ENCODE measurements at regions of chrX and their contacts with region 1.

Region 1: DNA sequence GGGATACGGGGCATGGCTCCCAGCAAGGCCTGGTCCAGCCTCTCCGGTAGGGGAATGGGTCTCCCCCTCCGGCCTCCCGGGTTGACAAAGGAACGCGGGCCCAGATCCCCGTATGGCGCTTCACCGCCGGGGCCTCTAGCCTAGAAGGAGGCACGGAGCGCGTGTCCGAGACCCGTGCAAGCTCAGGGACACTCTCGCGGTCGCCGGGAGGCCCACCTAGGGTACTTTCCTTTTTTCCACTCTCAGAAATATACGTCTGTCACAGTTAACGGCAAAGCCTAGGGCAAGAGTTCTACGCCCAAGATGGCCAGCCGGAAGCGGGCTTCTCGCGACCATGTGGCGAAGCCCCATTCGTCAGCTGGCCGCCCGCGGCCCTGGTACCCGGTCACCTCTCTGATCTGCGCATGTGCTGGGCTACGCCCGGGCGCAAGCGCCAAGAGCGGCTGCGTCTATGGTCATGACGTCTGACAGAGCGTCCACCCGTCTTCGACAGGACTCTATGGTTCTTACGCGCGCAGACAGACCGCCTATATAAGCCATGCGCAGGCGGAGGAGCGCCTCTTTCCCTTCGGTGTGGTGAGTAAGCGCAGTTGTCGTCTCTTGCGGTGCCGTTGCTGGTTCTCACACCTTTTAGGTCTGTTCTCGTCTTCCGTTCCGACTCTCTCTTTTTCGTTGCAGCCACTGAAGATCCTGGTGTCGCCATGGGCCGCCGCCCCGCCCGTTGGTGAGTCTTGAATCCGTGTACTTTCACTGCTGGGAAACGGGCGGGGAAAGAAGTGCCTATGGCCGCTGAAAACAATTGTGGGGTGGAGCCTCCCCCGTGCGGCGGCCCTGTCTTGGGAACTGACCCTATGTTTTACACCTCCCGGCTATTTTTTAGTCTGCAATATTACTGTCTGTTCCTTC is at the start of gene RPL10:
- DNase-seq: peak; percentile 92
- ATAC-seq: peak; percentile 49
- H3K4me3 ChIP-seq: peak within 1 kb of the TSS; percentile 73 to 85 (median 85)
- H3K27ac ChIP-seq: peak within 1 kb of the TSS; percentile 98
- H3K4me1 ChIP-seq: peaks cover 32% of the 10 kb centered on the region
- H3K27me3 ChIP-seq: no peaks in the 10 kb centered on the region; a peak in 1 of 5 replicates
- CTCF ChIP-seq: no peak
- EP300 ChIP-seq: no peak
- POLR2A ChIP-seq: peak in 1 of 2 experiments; percentile 100; a peak in 2 of 4 replicates
- RAD21 ChIP-seq: no peak
- total RNA-seq, gene RPL10: 2,381 and 2,883 TPM in 2 replicates

Region 2: GRCh38 chrX:154357197-154357596 is 40.9 kb before region 1 on chrX:
- CTCF ChIA-PET with region 1: no interaction called
- POLR2A ChIA-PET with region 1: no interaction called
- in situ Hi-C with region 1: no loop called
- intact Hi-C with region 1: no loop called
- DNase-seq: no peak
- ATAC-seq: no peak
- H3K4me3 ChIP-seq: no peak overlapping the region
- H3K27ac ChIP-seq: no peak overlapping the region
- H3K4me1 ChIP-seq: peaks cover 18% of the 10 kb centered on the region
- H3K27me3 ChIP-seq: no peaks in the 10 kb centered on the region
- CTCF ChIP-seq: no peak
- EP300 ChIP-seq: no peak
- POLR2A ChIP-seq: no peak
- RAD21 ChIP-seq: no peak

Region 3: DNA sequence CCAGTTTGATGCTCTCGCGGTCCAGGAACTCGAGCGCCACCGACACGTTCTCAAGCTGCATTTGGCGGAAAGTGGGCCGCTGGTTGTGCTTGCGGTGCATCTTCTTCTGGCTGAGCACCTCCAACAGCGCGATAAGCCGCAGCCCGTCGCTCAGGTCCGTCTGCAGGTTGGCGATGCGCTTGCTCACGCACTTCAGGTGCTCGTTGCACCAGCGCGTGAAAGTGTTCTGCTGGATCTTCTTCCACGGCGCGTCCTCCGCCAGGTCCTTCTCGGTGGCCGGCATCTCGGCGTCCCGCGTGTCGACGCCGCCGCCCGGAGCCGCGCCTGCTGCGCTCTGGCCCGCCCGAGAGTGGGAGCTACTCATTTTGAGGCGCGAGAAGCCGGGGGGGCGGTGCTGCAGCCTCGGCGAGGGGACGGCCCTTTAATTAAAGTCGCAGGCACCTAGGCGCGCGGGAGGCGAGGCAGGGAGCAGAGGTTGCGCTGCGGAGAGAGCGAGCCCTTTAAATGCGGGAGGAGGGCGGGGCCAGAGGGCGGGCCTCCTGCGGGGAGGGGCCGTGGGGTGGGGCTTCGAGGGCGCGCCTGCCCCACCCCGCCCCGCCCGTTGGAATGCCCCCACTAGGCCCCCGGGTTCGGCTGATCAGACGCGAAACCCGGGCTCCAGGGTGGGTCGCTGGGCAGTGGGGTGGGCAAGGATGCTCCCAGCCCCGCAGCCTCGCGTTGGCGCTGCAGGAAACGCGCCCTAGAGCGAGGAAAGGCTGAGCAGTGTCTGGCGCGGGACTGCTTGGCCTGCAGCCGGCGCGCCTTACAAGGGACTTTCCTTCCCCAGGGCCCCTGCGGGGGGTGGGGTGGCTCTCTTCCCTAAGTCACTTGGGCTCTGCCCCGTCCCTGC is 26.9 kb before region 1 on chrX:
- CTCF ChIA-PET with region 1: no interaction called
- POLR2A ChIA-PET with region 1: interaction called, 15 read pairs
- in situ Hi-C with region 1: no loop called
- intact Hi-C with region 1: no loop called
- DNase-seq: peak; percentile 85
- ATAC-seq: peak; percentile 57
- H3K4me3 ChIP-seq: peak overlapping the region; percentile 65 to 92 (median 80)
- H3K27ac ChIP-seq: peak overlapping the region; percentile 58
- H3K4me1 ChIP-seq: peaks cover 37% of the 10 kb centered on the region
- H3K27me3 ChIP-seq: no peaks in the 10 kb centered on the region
- CTCF ChIP-seq: peak; percentile 25; the same call in 1 of the 2 replicates
- EP300 ChIP-seq: no peak
- POLR2A ChIP-seq: peak in 1 of 2 experiments; percentile 89; a peak in 2 of 4 replicates
- RAD21 ChIP-seq: no peak

Region 4: GRCh38 chrX:154378782-154379591 is 19.1 kb before region 1 on chrX and contains the start of gene EMD:
- CTCF ChIA-PET with region 1: no interaction called
- POLR2A ChIA-PET with region 1: interaction called, 15 read pairs
- in situ Hi-C with region 1: no loop called
- intact Hi-C with region 1: no loop called
- DNase-seq: peak; percentile 93
- ATAC-seq: peak; percentile 88
- H3K4me3 ChIP-seq: peak within 1 kb of the TSS; percentile 72 to 86 (median 76)
- H3K27ac ChIP-seq: peak within 1 kb of the TSS; percentile 77
- H3K4me1 ChIP-seq: peaks cover 33% of the 10 kb centered on the region
- H3K27me3 ChIP-seq: no peaks in the 10 kb centered on the region
- CTCF ChIP-seq: no peak
- EP300 ChIP-seq: no peak
- POLR2A ChIP-seq: no peak
- RAD21 ChIP-seq: no peak
- total RNA-seq, gene EMD: 10.4 and 14.5 TPM in 2 replicates

Region 5: DNA sequence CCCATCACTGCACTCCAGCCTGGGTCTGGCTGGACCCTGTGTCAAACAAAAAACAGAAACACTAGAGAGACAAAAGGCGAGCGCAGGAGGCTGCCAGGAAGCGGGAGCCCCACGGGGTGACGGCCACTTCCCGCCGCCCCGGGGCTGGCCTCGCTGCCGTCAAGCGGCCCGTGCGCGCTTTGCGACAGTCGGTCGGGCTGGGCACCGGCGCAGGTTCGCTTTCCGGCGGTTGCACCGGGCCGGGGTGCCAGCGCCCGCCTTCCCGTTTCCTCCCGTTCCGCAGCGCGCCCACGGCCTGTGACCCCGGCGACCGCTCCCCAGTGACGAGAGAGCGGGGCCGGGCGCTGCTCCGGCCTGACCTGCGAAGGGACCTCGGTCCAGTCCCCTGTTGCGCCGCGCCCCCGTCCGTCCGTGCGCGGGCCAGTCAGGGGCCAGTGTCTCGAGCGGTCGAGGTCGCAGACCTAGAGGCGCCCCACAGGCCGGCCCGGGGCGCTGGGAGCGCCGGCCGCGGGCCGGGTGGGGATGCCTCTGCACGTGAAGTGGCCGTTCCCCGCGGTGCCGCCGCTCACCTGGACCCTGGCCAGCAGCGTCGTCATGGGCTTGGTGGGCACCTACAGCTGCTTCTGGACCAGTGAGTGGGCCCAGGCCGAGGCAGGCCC is 13.4 kb after region 1 on chrX and contains the start of gene TAFAZZIN:
- CTCF ChIA-PET with region 1: no interaction called
- POLR2A ChIA-PET with region 1: interaction called, 75 read pairs
- in situ Hi-C with region 1: no loop called
- intact Hi-C with region 1: no loop called
- DNase-seq: peak; percentile 21
- ATAC-seq: peak; percentile 58
- H3K4me3 ChIP-seq: peak within 1 kb of the TSS; percentile 57 to 73 (median 72)
- H3K27ac ChIP-seq: peak within 1 kb of the TSS; percentile 67
- H3K4me1 ChIP-seq: peaks cover 25% of the 10 kb centered on the region
- H3K27me3 ChIP-seq: no peaks in the 10 kb centered on the region
- CTCF ChIP-seq: no peak
- EP300 ChIP-seq: no peak
- POLR2A ChIP-seq: peak; percentile 33 to 78; a peak in 3 of 4 replicates
- RAD21 ChIP-seq: no peak
- total RNA-seq, gene TAFAZZIN: 6.3 and 16.8 TPM in 2 replicates

Region 6: DNA sequence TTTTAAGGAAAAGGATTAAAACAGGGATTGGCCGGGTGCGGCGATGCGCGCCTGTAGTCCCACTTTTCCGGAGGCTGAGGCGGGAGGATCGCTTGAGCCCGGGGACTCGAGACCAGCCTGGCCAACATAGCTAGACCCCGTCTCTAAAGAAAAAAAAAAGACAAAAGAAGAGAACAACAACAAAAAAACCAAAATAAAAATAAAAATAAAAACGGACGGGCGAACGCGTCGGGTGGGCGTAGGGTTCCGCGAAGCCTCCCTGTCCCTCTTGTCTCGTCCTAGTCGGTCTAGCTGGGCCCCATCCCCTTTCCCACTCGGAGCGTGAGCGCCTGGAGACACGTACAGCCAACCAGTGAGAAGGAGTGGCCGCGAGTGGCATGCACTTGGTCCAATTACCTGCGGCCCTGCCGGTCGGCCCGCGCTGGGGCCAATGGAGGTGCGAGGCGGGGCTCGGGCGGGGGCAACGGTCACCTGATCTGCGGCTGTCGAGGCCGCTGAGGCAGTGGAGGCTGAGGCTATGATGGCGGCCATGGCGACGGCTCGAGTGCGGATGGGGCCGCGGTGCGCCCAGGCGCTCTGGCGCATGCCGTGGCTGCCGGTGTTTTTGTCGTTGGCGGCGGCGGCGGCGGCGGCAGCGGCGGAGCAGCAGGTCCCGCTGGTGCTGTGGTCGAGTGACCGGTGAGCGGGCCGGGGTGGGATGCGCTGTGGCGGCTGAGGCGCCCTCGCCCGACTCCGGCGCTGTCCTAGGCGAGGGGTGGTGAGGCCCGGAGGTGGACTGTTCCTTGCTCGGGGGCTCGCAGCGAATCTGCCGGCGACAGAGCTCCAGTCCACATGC is 30.3 kb after region 1 on chrX and contains the start of gene ATP6AP1:
- CTCF ChIA-PET with region 1: no interaction called
- POLR2A ChIA-PET with region 1: interaction called, 24 read pairs
- in situ Hi-C with region 1: no loop called
- intact Hi-C with region 1: no loop called
- DNase-seq: peak; percentile 85
- ATAC-seq: peak; percentile 99
- H3K4me3 ChIP-seq: peak within 1 kb of the TSS; percentile 64 to 74 (median 72)
- H3K27ac ChIP-seq: peak within 1 kb of the TSS; percentile 54
- H3K4me1 ChIP-seq: peaks cover 33% of the 10 kb centered on the region
- H3K27me3 ChIP-seq: no peaks in the 10 kb centered on the region
- CTCF ChIP-seq: no peak
- EP300 ChIP-seq: no peak
- POLR2A ChIP-seq: no peak
- RAD21 ChIP-seq: no peak
- total RNA-seq, gene ATP6AP1: 23.1 and 56.7 TPM in 2 replicates

Region 7: GRCh38 chrX:154490414-154491083 is 92.5 kb after region 1 on chrX and contains the start of gene SLC10A3:
- CTCF ChIA-PET with region 1: no interaction called
- POLR2A ChIA-PET with region 1: interaction called, 17 read pairs
- in situ Hi-C with region 1: no loop called
- intact Hi-C with region 1: no loop called
- DNase-seq: peak; percentile 87
- ATAC-seq: peak; percentile 92
- H3K4me3 ChIP-seq: peak within 1 kb of the TSS; percentile 68 to 78 (median 72)
- H3K27ac ChIP-seq: peak within 1 kb of the TSS; percentile 73
- H3K4me1 ChIP-seq: peaks cover 12% of the 10 kb centered on the region
- H3K27me3 ChIP-seq: no peaks in the 10 kb centered on the region
- CTCF ChIP-seq: peak; percentile 59
- EP300 ChIP-seq: no peak
- POLR2A ChIP-seq: peak in 1 of 2 experiments; percentile 70; a peak in 2 of 4 replicates
- RAD21 ChIP-seq: no peak
- total RNA-seq, gene SLC10A3: 10.1 and 10.8 TPM in 2 replicates

Region 8: DNA sequence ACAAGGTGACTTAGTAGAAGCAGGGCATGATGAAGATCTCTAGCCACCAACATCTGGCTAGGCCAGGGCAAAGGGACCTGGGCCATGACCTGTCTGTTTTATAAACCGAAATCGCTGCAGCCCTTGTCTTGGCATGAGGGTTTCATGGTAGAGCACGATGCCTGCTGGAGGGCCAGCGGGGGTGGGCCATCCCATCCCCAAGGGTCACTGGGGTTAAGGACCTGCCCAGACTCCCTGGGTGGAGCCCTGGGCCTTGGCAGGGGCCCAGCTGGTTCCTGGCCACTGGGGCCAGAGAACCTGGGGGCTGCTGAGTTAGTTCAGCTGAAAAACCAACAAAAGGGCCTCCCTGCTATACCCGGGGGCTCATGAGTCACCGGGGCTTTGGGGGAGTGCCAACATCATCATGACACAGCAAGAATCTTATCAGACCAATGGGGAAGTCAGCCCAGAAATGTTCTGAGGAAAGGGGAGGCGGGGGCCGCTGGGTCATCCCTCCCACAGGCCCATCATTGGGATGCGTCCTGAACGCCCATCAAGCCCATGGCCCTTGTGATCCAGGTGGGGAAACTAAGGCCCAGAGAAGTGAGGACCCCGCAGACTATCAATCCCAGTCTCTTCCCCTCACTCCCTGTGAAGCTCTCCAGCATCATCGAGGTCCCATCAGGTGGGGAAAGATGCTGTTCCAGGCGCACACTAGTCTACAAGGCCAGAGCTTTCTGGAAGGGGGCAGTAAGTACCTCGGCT is 143.8 kb after region 1 on chrX:
- CTCF ChIA-PET with region 1: no interaction called
- POLR2A ChIA-PET with region 1: interaction called, 24 read pairs
- in situ Hi-C with region 1: loop called (anchors 25 kb)
- intact Hi-C with region 1: no loop called
- DNase-seq: peak; percentile 94
- ATAC-seq: peak; percentile 59
- H3K4me3 ChIP-seq: peak overlapping the region; percentile 54 to 78 (median 72); a peak in 5 of 6 replicates
- H3K27ac ChIP-seq: peak overlapping the region; percentile 100
- H3K4me1 ChIP-seq: peaks cover 66% of the 10 kb centered on the region
- H3K27me3 ChIP-seq: no peaks in the 10 kb centered on the region; a peak in 1 of 5 replicates
- CTCF ChIP-seq: no peak
- EP300 ChIP-seq: peak in 1 of 2 experiments; percentile 93; a peak in 2 of 4 replicates
- POLR2A ChIP-seq: no peak; a peak in 2 of 4 replicates
- RAD21 ChIP-seq: no peak